MCF 10A (cell line): ENCODE measurements at regions of chr6 and their contacts with region 1.

Region 1: DNA sequence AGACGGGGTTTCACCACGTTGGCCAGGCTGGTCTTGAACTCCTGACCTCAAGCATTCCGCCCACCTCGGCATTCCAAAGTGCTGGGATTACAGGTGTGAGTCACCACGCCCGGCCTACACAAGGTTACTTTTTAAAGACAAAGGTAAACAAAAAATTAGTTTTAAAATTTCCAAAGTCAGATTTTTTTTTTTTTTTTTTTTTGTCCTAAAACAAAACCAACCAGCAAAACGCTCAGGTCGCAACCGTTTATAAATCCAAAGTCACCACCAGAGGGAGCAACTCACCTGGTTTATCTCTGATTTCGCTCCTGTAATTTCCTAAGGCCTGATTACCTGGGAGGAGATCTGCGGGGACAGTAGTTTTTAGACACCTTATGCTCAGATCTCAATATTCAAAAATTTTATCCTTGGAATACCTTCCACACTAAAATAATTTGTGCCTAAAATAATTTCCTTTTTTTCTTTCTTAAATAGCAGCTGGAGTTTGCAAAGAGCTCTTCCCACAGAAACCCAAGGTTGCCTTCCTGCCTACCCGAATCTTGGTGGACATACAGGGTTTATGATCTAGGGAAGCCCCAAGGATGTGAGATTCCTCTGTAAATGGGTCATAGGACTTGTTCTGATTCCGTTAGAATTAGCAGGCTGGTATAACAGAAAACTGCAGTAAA is 19.8 kb upstream of the TREM1 start:
- DNase-seq: peak; percentile 72
- H3K4me3 Mint-ChIP-seq: no peak overlapping the region
- H3K27ac Mint-ChIP-seq: no peak overlapping the region
- H3K4me1 Mint-ChIP-seq: no peaks in the 10 kb centered on the region
- H3K27me3 Mint-ChIP-seq: peaks cover 62% of the 10 kb centered on the region
- CTCF ChIP-seq: peak; percentile 49

Region 2: DNA sequence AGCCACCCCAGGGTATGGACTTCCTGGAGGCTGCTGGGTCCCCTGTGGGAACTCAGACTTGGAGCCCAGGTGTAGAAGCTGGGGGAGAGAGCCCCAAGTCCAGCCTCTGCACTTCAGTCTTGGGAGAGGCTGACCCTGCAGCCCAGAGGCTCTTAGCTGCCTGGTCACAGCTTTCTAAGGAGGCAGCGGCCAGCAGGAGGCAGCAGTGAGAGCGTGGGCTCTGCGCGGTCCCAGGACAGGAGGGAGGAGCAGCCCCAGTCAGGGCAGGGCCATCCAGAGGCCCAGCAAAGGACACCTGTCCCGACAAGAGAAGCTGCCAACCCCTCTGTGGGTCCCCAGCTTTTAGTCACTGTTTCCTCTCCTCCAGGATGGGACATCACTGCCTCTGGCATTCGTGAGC is 114.8 kb before region 1 on chr6:
- CTCF ChIA-PET with region 1: no interaction called
- POLR2A ChIA-PET with region 1: no interaction called
- intact Hi-C with region 1: no loop called
- DNase-seq: peak; percentile 40
- H3K4me3 Mint-ChIP-seq: no peak overlapping the region
- H3K27ac Mint-ChIP-seq: no peak overlapping the region
- H3K4me1 Mint-ChIP-seq: no peaks in the 10 kb centered on the region
- H3K27me3 Mint-ChIP-seq: peaks cover 45% of the 10 kb centered on the region
- CTCF ChIP-seq: no peak

Region 3: DNA sequence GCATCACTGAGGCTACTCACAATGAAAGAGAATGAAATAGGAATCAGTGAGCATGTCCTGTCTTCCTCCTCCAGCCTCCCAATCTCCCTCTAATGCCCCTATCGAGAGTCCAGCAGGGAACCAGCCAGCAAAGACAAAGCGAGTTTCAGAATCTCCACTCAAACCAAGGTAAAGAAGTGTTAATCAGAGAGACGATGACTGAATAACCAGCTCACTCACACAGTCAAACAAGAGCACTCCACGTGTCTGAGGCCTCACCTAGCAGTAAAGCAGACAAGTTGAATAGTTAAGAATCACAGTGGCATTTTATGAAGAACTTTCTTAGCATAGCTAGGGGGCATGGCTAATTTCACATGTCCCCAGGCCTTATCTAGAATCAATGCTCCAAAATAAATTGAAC is 16.5 kb before region 1 on chr6:
- CTCF ChIA-PET with region 1: interaction called, 44 read pairs
- POLR2A ChIA-PET with region 1: no interaction called
- intact Hi-C with region 1: no loop called
- DNase-seq: no peak
- H3K4me3 Mint-ChIP-seq: no peak overlapping the region
- H3K27ac Mint-ChIP-seq: no peak overlapping the region
- H3K4me1 Mint-ChIP-seq: peaks cover 24% of the 10 kb centered on the region
- H3K27me3 Mint-ChIP-seq: peaks cover under 1% of the 10 kb centered on the region
- CTCF ChIP-seq: no peak